Natural killer cell (primary cell): ENCODE measurements at regions of chr2 and their contacts with region 1.

Region 1: DNA sequence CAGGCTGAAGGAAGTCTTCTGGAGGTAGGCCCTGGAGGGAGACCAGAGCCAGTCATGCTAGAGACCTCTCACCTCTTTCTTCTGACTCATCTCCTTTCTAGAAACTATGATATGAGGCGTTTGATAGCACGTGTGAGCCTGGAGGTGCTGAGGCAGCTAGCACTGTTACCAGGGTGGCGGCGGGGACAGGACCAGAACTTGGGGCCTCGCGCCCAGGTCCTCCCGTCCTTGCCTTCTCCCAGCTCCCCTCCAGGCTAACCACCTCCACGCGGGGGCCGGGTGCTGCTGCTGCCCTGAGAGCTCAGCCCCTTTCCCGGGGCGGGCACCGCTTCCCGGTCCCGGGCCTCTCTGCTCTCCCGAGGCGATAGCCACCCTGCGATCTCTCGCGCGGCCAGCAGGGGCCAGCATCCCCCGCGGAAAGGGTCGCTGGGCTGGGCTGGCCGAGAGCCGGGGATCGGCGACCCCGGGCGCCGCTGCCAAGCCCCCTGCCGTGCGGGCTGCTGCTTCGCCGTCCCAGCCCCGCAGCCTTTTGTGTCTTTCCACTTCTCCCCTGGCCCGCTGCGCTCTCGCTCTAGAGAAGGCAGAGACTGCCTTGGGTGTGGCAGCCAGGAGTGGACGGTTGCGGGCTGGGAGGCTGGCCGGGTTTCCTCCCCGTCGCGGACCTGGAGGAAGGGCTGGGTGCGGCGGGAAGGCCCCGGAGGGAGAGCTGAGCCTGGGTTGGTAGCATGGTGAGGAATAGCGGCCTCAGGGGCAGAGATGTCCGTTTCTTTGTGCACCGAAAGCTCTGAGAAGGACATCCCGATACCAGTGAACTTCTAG is 49.1 kb downstream of the TMEM17 start:
- DNase-seq: peak; percentile 66 to 72
- ATAC-seq: peak; percentile 77 to 97 (median 97)
- H3K4me3 ChIP-seq: peak overlapping the region; percentile 29
- H3K4me3 Mint-ChIP-seq: peak overlapping the region; percentile 53
- H3K27ac ChIP-seq: no peak overlapping the region
- H3K27ac Mint-ChIP-seq: no peak overlapping the region
- H3K4me1 ChIP-seq: peaks cover 9% of the 10 kb centered on the region
- H3K4me1 Mint-ChIP-seq: peaks cover 0 to 6% of the 10 kb centered on the region in 2 donors
- H3K27me3 ChIP-seq: peaks cover 3% of the 10 kb centered on the region
- H3K27me3 Mint-ChIP-seq: peaks cover 0 to 7% of the 10 kb centered on the region in 2 donors
- CTCF ChIP-seq: peak; percentile 96

Region 2: DNA sequence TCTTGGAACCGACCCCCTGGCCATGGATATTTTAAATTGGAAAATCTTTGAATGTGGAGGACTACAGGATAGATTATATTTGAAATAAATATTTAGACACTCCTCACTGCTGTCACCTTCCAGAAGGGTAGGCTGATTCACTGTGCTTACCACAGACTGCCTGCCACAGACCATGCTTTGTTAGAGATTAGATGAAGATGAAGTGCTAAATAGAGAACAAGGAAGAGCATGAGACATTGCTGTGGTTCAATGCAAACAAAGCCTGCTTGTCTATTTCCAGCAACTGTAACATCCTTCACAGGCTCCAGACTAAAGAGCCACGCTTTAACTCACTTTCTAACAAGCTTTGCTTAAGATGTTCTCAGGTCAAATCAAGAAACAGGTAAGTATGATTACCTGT is 130.1 kb after region 1 on chr2:
- intact Hi-C with region 1: no loop called
- DNase-seq: no peak
- ATAC-seq: no peak
- H3K4me3 ChIP-seq: no peak overlapping the region
- H3K4me3 Mint-ChIP-seq: no peak overlapping the region
- H3K27ac ChIP-seq: no peak overlapping the region
- H3K27ac Mint-ChIP-seq: no peak overlapping the region
- H3K4me1 ChIP-seq: no peaks in the 10 kb centered on the region
- H3K4me1 Mint-ChIP-seq: no peaks in the 10 kb centered on the region
- H3K27me3 ChIP-seq: no peaks in the 10 kb centered on the region
- H3K27me3 Mint-ChIP-seq: peaks cover 6 to 7% of the 10 kb centered on the region in 2 donors
- CTCF ChIP-seq: no peak

Region 3: GRCh38 chr2:62774555-62775366 is 317.8 kb after region 1 on chr2:
- intact Hi-C with region 1: loop called (anchors 1 kb)
- DNase-seq: peak in 1 of 2 donors; percentile 64
- ATAC-seq: peak; percentile 48 to 66 (median 63)
- H3K4me3 ChIP-seq: no peak overlapping the region
- H3K4me3 Mint-ChIP-seq: no peak overlapping the region
- H3K27ac ChIP-seq: no peak overlapping the region
- H3K27ac Mint-ChIP-seq: no peak overlapping the region
- H3K4me1 ChIP-seq: no peaks in the 10 kb centered on the region
- H3K4me1 Mint-ChIP-seq: peaks cover 0 to 5% of the 10 kb centered on the region in 2 donors
- H3K27me3 ChIP-seq: no peaks in the 10 kb centered on the region
- H3K27me3 Mint-ChIP-seq: no peaks in the 10 kb centered on the region
- CTCF ChIP-seq: peak; percentile 89

Region 4: GRCh38 chr2:63424329-63425078 is 967.6 kb after region 1 on chr2:
- intact Hi-C with region 1: loop called (anchors 10 kb)
- DNase-seq: peak in 1 of 2 donors; percentile 55
- ATAC-seq: peak; percentile 49 to 77 (median 54)
- H3K4me3 ChIP-seq: no peak overlapping the region
- H3K4me3 Mint-ChIP-seq: no peak overlapping the region
- H3K27ac ChIP-seq: no peak overlapping the region
- H3K27ac Mint-ChIP-seq: no peak overlapping the region
- H3K4me1 ChIP-seq: no peaks in the 10 kb centered on the region
- H3K4me1 Mint-ChIP-seq: no peaks in the 10 kb centered on the region
- H3K27me3 ChIP-seq: no peaks in the 10 kb centered on the region
- H3K27me3 Mint-ChIP-seq: no peaks in the 10 kb centered on the region
- CTCF ChIP-seq: peak; percentile 64

Region 5: GRCh38 chr2:63488118-63488713 is 1031.3 kb after region 1 on chr2:
- intact Hi-C with region 1: loop called (anchors 10 kb)
- DNase-seq: peak in 1 of 2 donors; percentile 5
- ATAC-seq: no peak
- H3K4me3 ChIP-seq: no peak overlapping the region
- H3K4me3 Mint-ChIP-seq: no peak overlapping the region
- H3K27ac ChIP-seq: no peak overlapping the region
- H3K27ac Mint-ChIP-seq: no peak overlapping the region
- H3K4me1 ChIP-seq: no peaks in the 10 kb centered on the region
- H3K4me1 Mint-ChIP-seq: peaks cover 0 to 4% of the 10 kb centered on the region in 2 donors
- H3K27me3 ChIP-seq: no peaks in the 10 kb centered on the region
- H3K27me3 Mint-ChIP-seq: no peaks in the 10 kb centered on the region
- CTCF ChIP-seq: peak; percentile 36

Region 6: GRCh38 chr2:63544017-63544627 is 1087.2 kb after region 1 on chr2:
- intact Hi-C with region 1: loop called (anchors 10 kb)
- DNase-seq: peak in 1 of 2 donors; percentile 18
- ATAC-seq: no peak
- H3K4me3 ChIP-seq: no peak overlapping the region
- H3K4me3 Mint-ChIP-seq: no peak overlapping the region
- H3K27ac ChIP-seq: no peak overlapping the region
- H3K27ac Mint-ChIP-seq: no peak overlapping the region
- H3K4me1 ChIP-seq: no peaks in the 10 kb centered on the region
- H3K4me1 Mint-ChIP-seq: no peaks in the 10 kb centered on the region
- H3K27me3 ChIP-seq: no peaks in the 10 kb centered on the region
- H3K27me3 Mint-ChIP-seq: no peaks in the 10 kb centered on the region
- CTCF ChIP-seq: peak; percentile 46